Panc1 (cell line): ENCODE measurements at regions of chr6 and their contacts with region 1.

Region 1: GRCh38 chr6:73461537-73462350 is at the start of gene MTO1:
- DNase-seq: peak; percentile 76
- ATAC-seq: peak; percentile 97
- H3K4me3 ChIP-seq: peak within 1 kb of the TSS; percentile 84 to 97
- H3K27ac ChIP-seq: peak within 1 kb of the TSS; percentile 87
- H3K4me1 ChIP-seq: peaks cover 2% of the 10 kb centered on the region; the same call in 1 of the 2 replicates
- H3K27me3 ChIP-seq: no peaks in the 10 kb centered on the region
- CTCF ChIP-seq: no peak
- total RNA-seq, gene MTO1: 57.9 TPM

Region 2: GRCh38 chr6:73451223-73452107 is 10.3 kb before region 1 on chr6:
- CTCF ChIA-PET with region 1: no interaction called
- POLR2A ChIA-PET with region 1: interaction called, 12 read pairs
- in situ Hi-C with region 1: no loop called
- intact Hi-C with region 1: no loop called
- DNase-seq: peak; percentile 54
- ATAC-seq: peak; percentile 71
- H3K4me3 ChIP-seq: peak overlapping the region; percentile 76 to 95
- H3K27ac ChIP-seq: peak overlapping the region; percentile 99
- H3K4me1 ChIP-seq: peaks cover 4% of the 10 kb centered on the region; the same call in 1 of the 2 replicates
- H3K27me3 ChIP-seq: no peaks in the 10 kb centered on the region
- CTCF ChIP-seq: no peak; the same call in 1 of the 2 replicates

Region 3: GRCh38 chr6:73497915-73498314 is 36.2 kb after region 1 on chr6:
- CTCF ChIA-PET with region 1: no interaction called
- POLR2A ChIA-PET with region 1: interaction called, 11 read pairs
- in situ Hi-C with region 1: no loop called
- intact Hi-C with region 1: no loop called
- DNase-seq: no peak
- ATAC-seq: no peak
- H3K4me3 ChIP-seq: no peak overlapping the region
- H3K27ac ChIP-seq: no peak overlapping the region
- H3K4me1 ChIP-seq: no peaks in the 10 kb centered on the region
- H3K27me3 ChIP-seq: no peaks in the 10 kb centered on the region
- CTCF ChIP-seq: no peak

Region 4: DNA sequence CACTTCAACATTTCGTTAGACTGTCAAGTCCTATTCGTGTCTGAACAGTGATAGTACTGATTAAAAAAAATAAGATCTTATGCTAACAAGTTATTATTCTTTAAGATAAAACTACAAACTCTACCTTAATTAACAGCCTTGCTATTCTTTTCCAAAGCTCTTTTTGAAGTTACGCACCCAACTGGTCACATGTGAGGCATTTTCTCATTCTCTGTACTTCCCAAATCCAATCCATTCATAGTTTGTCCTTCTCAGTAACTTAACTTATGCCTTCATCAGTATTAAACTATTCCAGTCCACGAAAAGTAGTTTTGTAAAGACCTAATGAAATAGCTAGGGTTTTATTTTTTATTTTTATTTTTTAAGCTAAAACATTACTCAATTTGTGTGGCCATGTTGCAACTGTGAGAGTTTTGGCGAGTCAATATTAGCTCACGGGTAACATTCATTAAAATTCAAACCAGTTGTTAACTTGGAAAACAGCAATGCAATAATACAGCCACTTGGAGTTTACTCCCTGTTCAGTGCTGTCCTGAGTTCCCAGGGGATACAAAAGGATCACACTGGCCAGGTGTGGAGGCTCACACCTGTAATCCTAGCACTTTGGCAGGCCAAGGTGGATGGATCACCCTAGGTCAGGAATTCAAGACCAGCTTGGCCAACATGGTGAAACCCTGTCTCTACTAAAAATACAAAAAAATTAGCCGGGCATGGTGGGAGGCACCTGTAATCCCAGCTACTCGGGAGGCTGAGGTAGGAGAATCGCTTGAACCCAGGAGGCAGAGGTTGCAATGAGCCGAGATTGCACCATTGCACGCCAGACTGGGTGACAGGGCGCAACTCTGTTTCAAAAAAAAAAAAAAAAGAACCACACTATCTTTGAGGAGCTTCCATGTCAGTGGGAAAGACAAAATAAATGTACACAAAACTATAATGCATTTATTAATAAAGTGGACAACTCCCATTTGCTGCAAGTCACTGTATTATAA is 87.0 kb after region 1 on chr6:
- CTCF ChIA-PET with region 1: no interaction called
- POLR2A ChIA-PET with region 1: no interaction called
- in situ Hi-C with region 1: no loop called
- intact Hi-C with region 1: no loop called
- DNase-seq: no peak
- ATAC-seq: no peak
- H3K4me3 ChIP-seq: no peak overlapping the region
- H3K27ac ChIP-seq: no peak overlapping the region
- H3K4me1 ChIP-seq: no peaks in the 10 kb centered on the region
- H3K27me3 ChIP-seq: no peaks in the 10 kb centered on the region
- CTCF ChIP-seq: no peak

Region 5: GRCh38 chr6:73653571-73654424 is 192.1 kb after region 1 on chr6 and contains the start of gene SLC17A5:
- CTCF ChIA-PET with region 1: no interaction called
- POLR2A ChIA-PET with region 1: no interaction called
- in situ Hi-C with region 1: no loop called
- intact Hi-C with region 1: loop called (anchors 5 kb)
- DNase-seq: peak; percentile 75
- ATAC-seq: peak; percentile 97
- H3K4me3 ChIP-seq: peak within 1 kb of the TSS; percentile 73 to 98
- H3K27ac ChIP-seq: peak within 1 kb of the TSS; percentile 77
- H3K4me1 ChIP-seq: peaks cover 21% of the 10 kb centered on the region
- H3K27me3 ChIP-seq: no peaks in the 10 kb centered on the region
- CTCF ChIP-seq: no peak
- total RNA-seq, gene SLC17A5: 20.6 TPM